ENCODE measurements at regions of chr12 and their contacts with region 1.

Region 1: DNA sequence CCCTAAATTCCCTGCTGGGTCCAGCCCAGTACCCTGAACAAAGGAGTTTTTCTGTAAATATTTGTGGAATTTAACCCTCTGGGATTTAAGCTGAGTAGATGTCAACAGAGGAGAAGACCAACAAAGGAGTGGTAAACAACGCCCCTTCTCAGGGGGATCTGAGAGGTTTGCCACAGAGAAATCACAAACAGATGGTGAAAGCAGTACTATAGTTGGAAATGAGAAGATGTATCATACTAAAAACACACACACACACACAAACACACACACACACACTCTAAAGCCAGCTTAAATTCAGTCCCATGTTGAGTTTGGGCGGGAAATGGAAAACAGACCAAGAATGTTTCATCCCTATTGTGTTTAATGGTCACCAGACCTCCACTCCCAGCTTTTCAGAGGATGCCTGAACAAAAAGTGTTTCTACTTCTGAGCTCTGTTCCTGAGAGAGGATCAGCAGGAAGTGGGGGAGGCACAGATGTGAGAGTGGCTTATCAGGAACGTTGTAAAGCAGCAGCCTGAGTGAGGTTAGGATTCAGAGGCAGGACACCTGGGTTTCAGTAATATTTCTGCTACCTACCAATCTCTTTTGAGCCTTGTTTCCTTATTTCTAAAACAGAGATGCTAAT is 3.2 kb downstream of the BIN2 start:
- DNase-seq: peak in 2 of 5 donors; percentile 5 to 16
- H3K4me3 ChIP-seq: peak overlapping the region; percentile 58
- H3K4me3 Mint-ChIP-seq: peak overlapping the region; percentile 81 to 99 (median 95)
- H3K27ac ChIP-seq: peak overlapping the region; percentile 5
- H3K27ac Mint-ChIP-seq: peak overlapping the region; percentile 81 to 100 (median 95)
- H3K4me1 ChIP-seq: peaks cover 66% of the 10 kb centered on the region
- H3K4me1 Mint-ChIP-seq: peaks cover 72 to 94% (median 90%) of the 10 kb centered on the region in 3 donors
- H3K27me3 ChIP-seq: no peaks in the 10 kb centered on the region
- H3K27me3 Mint-ChIP-seq: peaks cover 0 to 4% of the 10 kb centered on the region in 2 donors

Region 2: GRCh38 chr12:51047655-51048540 is 272.9 kb before region 1 on chr12 and contains the start of gene LETMD1:
- CTCF ChIA-PET with region 1: no interaction called
- POLR2A ChIA-PET with region 1: no interaction called
- DNase-seq: peak; percentile 84 to 96 (median 94)
- H3K4me3 ChIP-seq: peak within 1 kb of the TSS; percentile 82
- H3K4me3 Mint-ChIP-seq: peak within 1 kb of the TSS; percentile 92 to 100 (median 95)
- H3K27ac ChIP-seq: peak within 1 kb of the TSS; percentile 82
- H3K27ac Mint-ChIP-seq: peak within 1 kb of the TSS; percentile 92 to 99 (median 96)
- H3K4me1 ChIP-seq: peaks cover 29% of the 10 kb centered on the region
- H3K4me1 Mint-ChIP-seq: peaks cover 30 to 43% (median 40%) of the 10 kb centered on the region in 3 donors
- H3K27me3 ChIP-seq: no peaks in the 10 kb centered on the region
- H3K27me3 Mint-ChIP-seq: no peaks in the 10 kb centered on the region
- total RNA-seq, gene LETMD1: 61.8 to 64.3 TPM

Region 3: GRCh38 chr12:51225771-51226170 is 95.0 kb before region 1 on chr12:
- CTCF ChIA-PET with region 1: no interaction called
- POLR2A ChIA-PET with region 1: no interaction called
- DNase-seq: no peak
- H3K4me3 ChIP-seq: no peak overlapping the region
- H3K4me3 Mint-ChIP-seq: no peak overlapping the region
- H3K27ac ChIP-seq: no peak overlapping the region
- H3K27ac Mint-ChIP-seq: peak overlapping the region in 1 of 8 donors; percentile 42
- H3K4me1 ChIP-seq: no peaks in the 10 kb centered on the region
- H3K4me1 Mint-ChIP-seq: peaks cover 0 to 8% (median 2%) of the 10 kb centered on the region in 3 donors
- H3K27me3 ChIP-seq: no peaks in the 10 kb centered on the region
- H3K27me3 Mint-ChIP-seq: no peaks in the 10 kb centered on the region

Region 4: DNA sequence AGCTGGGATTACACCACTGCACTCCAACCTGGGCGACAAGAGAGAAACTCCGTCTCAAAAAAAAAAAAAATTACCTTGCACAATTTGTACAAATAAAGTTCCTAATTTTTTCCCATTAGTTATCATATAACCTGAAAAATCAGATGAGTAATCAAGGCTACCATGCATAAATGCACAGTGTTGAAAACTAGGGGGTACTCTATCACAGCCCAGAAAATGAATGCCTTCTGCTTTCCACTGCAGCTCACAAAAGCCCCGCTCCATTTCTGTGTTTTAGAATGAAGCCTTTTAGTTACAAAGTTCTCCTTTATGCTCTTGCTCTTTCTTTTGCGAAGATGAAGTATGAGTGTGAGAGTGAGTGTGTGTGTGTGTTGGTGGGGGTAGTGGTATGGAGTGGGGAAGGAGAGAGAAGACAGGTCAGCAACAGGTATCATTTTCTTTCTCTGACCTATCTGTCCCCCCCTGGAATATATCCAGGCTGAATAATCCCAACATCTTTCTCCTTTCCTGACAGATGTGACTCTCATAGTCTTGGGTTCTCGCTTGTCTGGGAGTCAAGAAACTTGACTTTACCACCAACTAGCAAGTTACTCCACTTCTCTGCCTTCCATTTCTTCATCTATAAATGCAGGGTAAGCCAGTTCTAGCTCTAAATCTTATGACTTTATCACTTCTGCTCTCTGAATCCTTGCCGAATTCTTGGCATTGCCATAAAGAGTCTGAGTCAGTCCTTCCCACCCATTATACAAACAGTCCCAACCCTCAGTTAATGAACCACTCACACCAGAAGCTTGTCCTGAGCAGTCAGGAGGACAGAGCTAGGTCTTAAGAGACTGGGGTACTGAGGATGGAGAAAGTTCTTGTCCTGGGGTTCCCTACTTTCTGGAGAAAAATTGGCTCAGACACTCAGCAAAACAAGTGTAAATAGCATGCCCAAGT is 12.9 kb before region 1 on chr12:
- CTCF ChIA-PET with region 1: interaction called, 10 read pairs
- POLR2A ChIA-PET with region 1: interaction called, 8 read pairs
- DNase-seq: peak in 1 of 5 donors; percentile 23
- H3K4me3 ChIP-seq: no peak overlapping the region
- H3K4me3 Mint-ChIP-seq: peak overlapping the region in 3 of 7 donors; percentile 53 to 62 (median 55)
- H3K27ac ChIP-seq: no peak overlapping the region
- H3K27ac Mint-ChIP-seq: peak overlapping the region; percentile 69 to 97 (median 88)
- H3K4me1 ChIP-seq: peaks cover 48% of the 10 kb centered on the region
- H3K4me1 Mint-ChIP-seq: peaks cover 69 to 81% (median 77%) of the 10 kb centered on the region in 3 donors
- H3K27me3 ChIP-seq: no peaks in the 10 kb centered on the region
- H3K27me3 Mint-ChIP-seq: no peaks in the 10 kb centered on the region

Measured in CD8-positive, alpha-beta memory T cell (primary cell).